IMR-90 (cell line): ENCODE measurements at regions of chr12 and their contacts with region 1.

Region 1: GRCh38 chr12:13223179-13223859 is 26.8 kb downstream of the EMP1 start:
- DNase-seq: peak; percentile 93
- ATAC-seq: peak; percentile 75
- H3K4me3 ChIP-seq: no peak overlapping the region
- H3K27ac ChIP-seq: peak overlapping the region; percentile 78
- H3K4me1 ChIP-seq: peaks cover 21% of the 10 kb centered on the region
- H3K27me3 ChIP-seq: no peaks in the 10 kb centered on the region
- CTCF ChIP-seq: no peak
- POLR2A ChIP-seq: no peak
- RAD21 ChIP-seq: no peak

Region 2: DNA sequence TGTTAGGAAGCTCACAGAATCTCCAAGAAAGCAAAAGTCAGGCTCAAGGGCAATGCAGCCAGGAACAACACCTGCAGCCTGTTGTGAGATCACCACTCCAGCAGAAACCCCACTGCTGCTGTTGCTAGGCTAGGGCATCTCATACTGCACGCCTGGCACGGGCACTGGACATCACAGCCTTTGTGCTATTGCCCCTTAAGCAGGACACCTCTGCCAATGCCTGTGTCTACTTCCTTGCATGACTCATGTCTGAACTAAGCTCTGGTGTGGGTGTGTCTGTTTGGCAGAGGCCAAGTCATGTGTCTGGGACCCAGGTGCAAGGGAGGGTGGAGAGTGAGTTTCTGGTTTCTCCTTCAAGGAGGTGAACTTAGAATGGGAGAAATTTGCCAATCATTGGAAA is 420.1 kb before region 1 on chr12:
- CTCF ChIA-PET with region 1: no interaction called
- POLR2A ChIA-PET with region 1: no interaction called
- dilution Hi-C with region 1: no loop called
- in situ Hi-C with region 1: no loop called
- intact Hi-C with region 1: loop called (anchors 5 kb)
- DNase-seq: peak; percentile 86
- ATAC-seq: peak; percentile 55
- H3K4me3 ChIP-seq: no peak overlapping the region
- H3K27ac ChIP-seq: 0 out of 2 replicates have a peak overlapping the region, but pooled peaks have one; percentile 13
- H3K4me1 ChIP-seq: peaks cover 21% of the 10 kb centered on the region
- H3K27me3 ChIP-seq: no peaks in the 10 kb centered on the region
- CTCF ChIP-seq: no peak
- POLR2A ChIP-seq: 0 out of 2 replicates have a peak, but pooled peaks have one; percentile 24
- RAD21 ChIP-seq: no peak

Region 3: GRCh38 chr12:12999959-13000615 is 223.2 kb before region 1 on chr12 and contains the start of gene HEBP1:
- CTCF ChIA-PET with region 1: no interaction called
- POLR2A ChIA-PET with region 1: no interaction called
- dilution Hi-C with region 1: no loop called
- in situ Hi-C with region 1: loop called (anchors 10 kb)
- intact Hi-C with region 1: no loop called
- DNase-seq: peak; percentile 84
- ATAC-seq: peak; percentile 90
- H3K4me3 ChIP-seq: peak within 1 kb of the TSS; percentile 97
- H3K27ac ChIP-seq: peak within 1 kb of the TSS; percentile 87
- H3K4me1 ChIP-seq: peaks cover 20% of the 10 kb centered on the region
- H3K27me3 ChIP-seq: no peaks in the 10 kb centered on the region
- CTCF ChIP-seq: no peak
- POLR2A ChIP-seq: peak; percentile 75
- RAD21 ChIP-seq: no peak
- total RNA-seq, gene HEBP1: 14.7 and 18.8 TPM in 2 replicates

Region 4: DNA sequence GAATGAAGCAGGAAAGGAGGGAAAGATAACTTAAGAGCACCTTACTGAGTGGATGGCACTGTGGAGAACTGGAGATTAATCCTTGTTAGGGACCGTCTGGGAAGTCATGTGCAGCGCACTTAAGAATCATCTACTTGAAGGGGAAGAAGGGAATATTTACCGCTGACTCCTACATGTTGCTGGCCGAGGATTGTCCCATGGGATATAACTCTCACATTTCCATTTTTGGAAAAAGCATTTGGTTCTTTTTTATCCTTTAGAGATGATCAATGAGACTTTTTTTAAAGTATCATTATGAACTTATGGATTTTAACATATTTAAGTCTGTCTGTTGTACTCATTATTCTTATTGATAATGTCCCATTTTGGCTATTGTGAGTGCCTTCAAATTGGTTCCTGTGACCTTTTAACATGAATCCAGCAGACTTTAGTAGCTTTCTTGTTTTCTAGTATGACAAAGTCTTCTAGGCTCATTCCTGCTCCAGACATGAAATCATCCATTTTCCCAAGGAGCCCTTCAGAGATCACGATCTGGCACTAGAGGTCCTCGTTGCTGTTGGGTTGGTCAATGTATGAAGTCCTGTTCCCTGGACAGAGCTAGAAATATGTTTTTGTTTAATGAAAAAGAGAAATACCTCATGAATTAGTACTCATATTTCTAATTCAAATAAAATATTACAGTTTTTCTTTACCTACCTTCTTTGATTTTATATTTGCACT is 199.3 kb before region 1 on chr12:
- CTCF ChIA-PET with region 1: interaction called, 10 read pairs
- POLR2A ChIA-PET with region 1: no interaction called
- dilution Hi-C with region 1: no loop called
- in situ Hi-C with region 1: no loop called
- intact Hi-C with region 1: no loop called
- DNase-seq: peak; percentile 82
- ATAC-seq: peak; percentile 94
- H3K4me3 ChIP-seq: no peak overlapping the region
- H3K27ac ChIP-seq: no peak overlapping the region
- H3K4me1 ChIP-seq: peaks cover 3% of the 10 kb centered on the region
- H3K27me3 ChIP-seq: peaks cover 2% of the 10 kb centered on the region; the same call in 1 of the 2 replicates
- CTCF ChIP-seq: peak; percentile 80
- POLR2A ChIP-seq: 0 out of 2 replicates have a peak, but pooled peaks have one; percentile 46
- RAD21 ChIP-seq: peak; percentile 85

Region 5: DNA sequence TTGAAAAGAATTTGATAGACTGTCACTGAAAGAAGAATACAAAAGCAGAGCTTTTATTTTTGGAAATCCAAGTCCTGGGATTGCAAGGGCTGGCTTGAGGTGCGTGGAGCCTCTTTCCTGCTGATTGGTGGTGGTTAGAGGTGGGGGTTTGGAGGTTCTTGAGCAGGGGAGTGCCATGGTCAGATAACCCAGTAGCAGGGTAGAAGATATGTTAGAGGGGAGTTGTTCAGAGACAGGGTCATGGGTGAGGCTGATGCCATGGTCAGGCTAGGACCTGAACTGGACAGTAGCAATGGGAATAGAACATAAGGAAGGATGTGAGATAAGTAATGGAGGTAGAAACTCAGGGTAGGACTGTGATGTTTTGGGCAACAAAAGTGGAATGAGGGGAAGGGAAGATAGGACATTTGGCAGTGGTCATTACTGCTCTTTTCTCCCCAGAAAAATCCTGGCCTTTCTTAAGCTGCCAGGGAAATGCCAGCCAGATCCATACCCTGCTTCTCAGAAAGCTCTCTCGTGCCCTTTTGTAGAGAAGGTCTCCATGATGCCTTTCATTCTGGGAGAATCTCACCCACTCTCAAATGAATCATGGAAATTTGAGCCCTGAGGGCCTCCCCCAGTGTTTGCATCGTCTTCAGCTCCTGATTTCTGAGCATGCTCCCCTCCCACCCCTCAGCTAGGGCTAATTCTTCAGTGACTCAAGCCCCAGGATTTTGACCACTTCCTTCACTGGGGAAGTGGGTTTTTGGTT is 17.3 kb before region 1 on chr12:
- CTCF ChIA-PET with region 1: no interaction called
- POLR2A ChIA-PET with region 1: no interaction called
- dilution Hi-C with region 1: no loop called
- in situ Hi-C with region 1: no loop called
- intact Hi-C with region 1: no loop called
- DNase-seq: peak; percentile 99
- ATAC-seq: peak; percentile 82
- H3K4me3 ChIP-seq: no peak overlapping the region
- H3K27ac ChIP-seq: peak overlapping the region; percentile 93
- H3K4me1 ChIP-seq: peaks cover 46% of the 10 kb centered on the region
- H3K27me3 ChIP-seq: no peaks in the 10 kb centered on the region
- CTCF ChIP-seq: no peak
- POLR2A ChIP-seq: peak; percentile 73
- RAD21 ChIP-seq: no peak

Region 6: GRCh38 chr12:13559318-13559978 is 336.1 kb after region 1 on chr12:
- CTCF ChIA-PET with region 1: no interaction called
- POLR2A ChIA-PET with region 1: no interaction called
- dilution Hi-C with region 1: no loop called
- in situ Hi-C with region 1: no loop called
- intact Hi-C with region 1: no loop called
- DNase-seq: no peak
- ATAC-seq: no peak
- H3K4me3 ChIP-seq: no peak overlapping the region
- H3K27ac ChIP-seq: no peak overlapping the region
- H3K4me1 ChIP-seq: no peaks in the 10 kb centered on the region
- H3K27me3 ChIP-seq: no peaks in the 10 kb centered on the region
- CTCF ChIP-seq: no peak
- POLR2A ChIP-seq: no peak
- RAD21 ChIP-seq: no peak